Kidney (tissue), 22 donors: ENCODE measurements at regions of chr2 and their contacts with region 1.

Region 1: GRCh38 chr2:219160186-219161017 is at the start of gene NHEJ1:
- DNase-seq: peak; percentile 96 to 98 (median 97)
- H3K4me3 ChIP-seq: peak within 1 kb of the TSS; percentile 68 to 69 (median 69)
- H3K27ac ChIP-seq: peak within 1 kb of the TSS; percentile 92 to 95
- H3K4me1 ChIP-seq: peaks cover 0 to 3% (median 0%) of the 10 kb centered on the region in 3 donors
- H3K27me3 ChIP-seq: no peaks in the 10 kb centered on the region
- CTCF ChIP-seq: peak; percentile 95
- total RNA-seq, gene NHEJ1: 17.5 TPM

Region 2: DNA sequence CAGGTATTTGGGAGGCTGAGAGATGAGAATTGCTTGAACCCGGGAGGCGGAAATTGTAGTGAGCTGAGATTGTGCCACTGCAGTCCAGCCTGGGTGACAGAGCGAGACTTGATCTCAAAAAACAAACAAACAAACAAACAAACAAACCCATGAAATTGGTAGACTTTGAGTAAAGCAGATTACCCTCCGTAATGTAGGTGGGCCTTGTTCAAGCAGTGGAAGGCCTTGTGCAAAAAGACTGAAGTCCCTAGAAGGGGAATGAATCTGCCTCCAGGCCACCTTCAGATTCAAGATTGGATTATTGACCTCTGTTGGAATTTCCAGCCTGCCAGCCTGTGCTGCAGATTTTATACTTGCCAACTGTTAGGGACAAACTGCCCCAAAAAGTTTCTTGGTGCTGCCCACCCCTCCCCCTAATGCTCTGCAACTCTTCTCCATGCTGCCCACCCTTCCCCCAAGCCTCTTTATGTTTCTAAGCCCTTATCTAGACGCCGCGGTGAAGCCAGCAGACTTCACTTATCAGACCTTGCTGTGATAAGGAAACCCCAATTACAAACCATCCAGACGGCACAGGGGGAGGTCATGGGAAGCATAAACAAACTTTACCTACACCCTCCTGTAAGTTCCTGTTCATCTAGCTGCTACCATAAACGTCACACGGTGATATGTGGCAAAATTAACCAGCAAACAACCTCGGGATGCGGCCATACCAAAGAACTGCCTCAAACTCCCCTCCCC is 361.5 kb before region 1 on chr2:
- intact Hi-C with region 1: no loop called
- DNase-seq: peak in 1 of 5 donors; percentile 21
- H3K4me3 ChIP-seq: no peak overlapping the region
- H3K27ac ChIP-seq: no peak overlapping the region
- H3K4me1 ChIP-seq: no peaks in the 10 kb centered on the region
- H3K27me3 ChIP-seq: no peaks in the 10 kb centered on the region
- CTCF ChIP-seq: no peak

Region 3: GRCh38 chr2:219269362-219270054 is 109.1 kb after region 1 on chr2:
- intact Hi-C with region 1: no loop called
- DNase-seq: peak; percentile 57 to 84 (median 64)
- H3K4me3 ChIP-seq: no peak overlapping the region
- H3K27ac ChIP-seq: peak overlapping the region in 1 of 2 donors; percentile 26
- H3K4me1 ChIP-seq: peaks cover 0 to 11% (median 2%) of the 10 kb centered on the region in 3 donors
- H3K27me3 ChIP-seq: no peaks in the 10 kb centered on the region
- CTCF ChIP-seq: no peak

Region 4: DNA sequence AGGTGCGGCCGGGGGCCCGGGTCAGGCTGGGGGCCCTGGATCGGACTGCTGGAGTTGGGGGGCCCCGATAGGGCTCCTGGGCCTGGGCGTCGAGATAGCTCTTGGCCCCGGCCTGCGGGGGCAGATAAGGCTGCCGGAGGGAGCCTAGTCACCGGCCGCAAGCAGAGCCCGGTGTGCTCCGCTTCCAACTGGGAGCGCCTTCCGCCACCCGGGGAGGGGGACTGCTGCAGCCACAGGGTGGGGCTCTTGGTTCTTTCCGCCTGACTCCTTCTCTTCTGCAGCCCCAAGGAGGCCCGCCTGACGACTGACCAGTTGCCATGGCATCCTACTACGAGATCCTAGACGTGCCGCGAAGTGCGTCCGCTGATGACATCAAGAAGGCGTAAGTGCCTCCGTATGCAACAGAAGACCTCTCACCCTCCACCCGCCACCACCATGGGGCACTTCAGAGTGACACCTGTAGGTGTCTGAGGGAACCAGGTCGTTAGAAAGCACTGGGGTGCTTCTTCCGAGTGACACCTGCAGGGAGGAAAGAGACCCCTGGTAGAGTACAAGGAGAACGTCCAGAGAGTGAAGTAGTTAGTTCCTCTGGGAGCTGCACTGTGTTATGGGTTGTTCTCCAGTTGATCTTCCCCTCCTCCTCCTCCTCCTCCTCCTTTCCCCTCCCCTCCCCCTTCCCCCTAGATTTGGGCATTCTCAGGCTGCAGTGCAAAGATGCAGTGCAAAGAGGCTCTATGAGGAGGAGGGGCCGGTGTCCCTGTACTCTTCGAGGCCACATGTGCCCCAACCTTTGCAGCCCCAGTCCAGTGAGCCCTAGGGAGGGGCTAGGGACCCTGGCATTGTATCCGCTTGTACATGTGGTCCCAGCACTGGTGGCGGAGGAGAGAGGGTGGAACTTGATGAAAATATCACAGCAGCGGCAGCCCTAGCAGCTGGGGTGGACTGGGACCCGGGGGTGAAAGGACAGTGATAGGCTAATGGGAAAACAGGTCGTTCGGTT is 119.4 kb after region 1 on chr2:
- intact Hi-C with region 1: loop called (anchors 10 kb)
- DNase-seq: peak; percentile 73 to 92 (median 85)
- H3K4me3 ChIP-seq: peak overlapping the region; percentile 72 to 92 (median 73)
- H3K27ac ChIP-seq: peak overlapping the region; percentile 93 to 95
- H3K4me1 ChIP-seq: peaks cover 8 to 21% (median 16%) of the 10 kb centered on the region in 3 donors
- H3K27me3 ChIP-seq: no peaks in the 10 kb centered on the region
- CTCF ChIP-seq: no peak